ENCODE measurements at regions of chr11 and their contacts with region 1.

Region 1: DNA sequence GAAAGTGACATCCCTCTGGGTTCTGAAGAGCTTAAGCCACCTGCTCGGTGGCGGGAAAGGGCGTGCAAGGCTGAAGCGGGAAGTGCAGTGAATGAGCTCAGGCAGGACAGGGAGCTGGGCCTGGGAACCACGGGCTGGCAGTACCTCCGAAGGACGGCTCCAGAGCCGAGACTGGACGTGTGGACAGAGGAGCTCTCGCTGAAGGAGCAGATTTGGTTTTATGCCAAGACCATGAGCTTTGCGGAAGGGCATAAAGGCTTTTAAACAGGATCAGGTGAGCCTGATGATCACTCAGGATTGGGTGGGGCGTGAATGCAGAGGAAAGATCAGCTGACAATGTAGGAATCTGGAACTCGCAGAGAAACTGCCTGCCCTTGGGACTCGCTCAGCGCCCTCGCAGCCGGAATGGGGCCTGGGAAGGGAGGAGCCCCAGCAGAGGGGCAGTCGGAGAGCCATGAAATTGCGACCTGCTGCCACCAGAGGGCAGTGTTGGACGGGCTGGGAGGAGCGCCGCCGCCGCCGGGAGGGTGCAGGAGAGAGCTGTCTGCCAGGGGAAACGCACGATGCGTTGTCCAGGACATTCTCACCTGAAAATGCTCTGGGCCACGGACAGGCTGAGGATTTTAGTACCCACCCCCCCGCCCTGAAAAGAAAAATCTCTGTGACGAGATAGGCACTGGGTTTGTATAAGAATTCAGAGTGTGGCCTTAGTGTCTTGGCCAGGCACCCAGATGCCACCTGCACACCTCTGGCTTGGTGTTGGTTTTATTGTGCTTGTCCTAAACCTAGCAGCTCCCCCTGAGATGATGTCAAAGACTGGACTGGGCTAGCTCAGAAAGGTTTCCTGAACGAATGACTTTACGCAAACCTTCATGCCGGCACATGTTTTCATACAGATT is 324.4 kb downstream of the NTM start:
- DNase-seq: peak; percentile 75
- H3K4me3 ChIP-seq: no peak overlapping the region
- H3K27ac ChIP-seq: no peak overlapping the region
- H3K4me1 ChIP-seq: no peaks in the 10 kb centered on the region
- H3K27me3 ChIP-seq: peaks cover 0 to 2% of the 10 kb centered on the region in 2 experiments
- CTCF ChIP-seq: peak; percentile 92 to 97
- POLR2A ChIP-seq: no peak

Region 2: DNA sequence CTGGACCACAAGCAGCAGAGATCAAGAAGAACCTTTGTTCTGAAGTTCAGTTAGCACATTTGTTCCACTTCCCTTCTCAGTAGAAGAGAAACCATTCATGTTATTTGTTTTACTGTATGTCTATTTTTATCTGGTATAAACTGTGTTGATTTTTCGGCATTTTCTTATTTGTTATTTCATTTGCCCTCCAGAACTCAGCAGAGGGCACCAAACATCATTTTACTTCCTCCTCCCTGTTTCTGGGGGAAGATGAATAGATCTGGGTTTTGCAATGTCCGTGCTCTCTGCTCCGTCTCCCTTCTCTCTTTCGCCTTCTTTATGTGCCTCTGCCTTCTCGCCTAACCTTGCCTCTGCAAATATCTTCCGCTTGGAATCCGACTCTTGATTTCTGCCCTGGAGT is 42.6 kb after region 1 on chr11:
- CTCF ChIA-PET with region 1: interaction called, 26 read pairs
- POLR2A ChIA-PET with region 1: no interaction called
- dilution Hi-C with region 1: no loop called
- intact Hi-C with region 1: no loop called
- DNase-seq: no peak
- H3K4me3 ChIP-seq: no peak overlapping the region
- H3K27ac ChIP-seq: no peak overlapping the region
- H3K4me1 ChIP-seq: peaks cover 6% of the 10 kb centered on the region
- H3K27me3 ChIP-seq: no peaks in the 10 kb centered on the region
- CTCF ChIP-seq: no peak
- POLR2A ChIP-seq: no peak

Region 3: DNA sequence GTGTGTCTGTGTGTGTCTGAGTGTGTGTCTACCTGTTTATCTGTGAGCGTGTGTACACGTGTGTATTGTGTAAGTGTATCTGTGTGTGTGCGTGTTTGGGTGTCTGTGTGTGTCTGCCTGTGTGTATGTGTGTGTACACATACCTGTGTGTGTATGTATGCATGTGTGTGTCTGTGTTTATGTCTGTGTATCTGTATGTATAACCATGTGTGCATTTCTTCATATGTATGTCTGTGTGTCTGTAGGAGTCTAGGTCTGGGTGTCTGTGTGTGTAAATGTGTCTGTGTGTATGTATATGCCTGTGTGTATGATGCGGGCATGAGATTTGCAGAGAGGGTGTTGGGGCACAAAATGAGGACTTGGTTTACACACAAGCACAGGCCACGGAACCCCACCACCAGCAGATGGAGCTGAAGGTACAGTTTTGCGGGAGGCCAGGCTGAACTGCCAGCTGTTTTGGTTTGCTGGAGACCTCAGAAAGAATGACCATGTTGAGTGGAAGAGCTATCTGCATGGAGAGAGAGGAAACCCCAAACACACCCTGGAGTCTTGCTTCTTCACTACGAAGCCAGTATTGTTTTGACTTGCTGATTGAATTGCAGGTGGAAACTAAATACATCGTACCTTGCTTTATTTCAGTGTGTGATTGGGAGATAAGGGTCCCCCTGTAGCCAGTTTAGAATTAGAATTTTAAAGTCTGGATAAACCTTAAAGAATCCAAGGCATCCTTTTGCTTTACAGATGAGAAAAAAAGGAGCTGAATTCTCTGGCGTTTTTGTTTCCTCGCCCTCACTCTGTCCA is 172.9 kb after region 1 on chr11:
- CTCF ChIA-PET with region 1: interaction called, 105 read pairs
- POLR2A ChIA-PET with region 1: no interaction called
- dilution Hi-C with region 1: no loop called
- intact Hi-C with region 1: loop called (anchors 1 kb)
- DNase-seq: peak; percentile 80
- H3K4me3 ChIP-seq: no peak overlapping the region
- H3K27ac ChIP-seq: no peak overlapping the region
- H3K4me1 ChIP-seq: peaks cover 36% of the 10 kb centered on the region
- H3K27me3 ChIP-seq: no peaks in the 10 kb centered on the region
- CTCF ChIP-seq: peak; percentile 85 to 88
- POLR2A ChIP-seq: no peak

Region 4: GRCh38 chr11:132028380-132029240 is 333.8 kb after region 1 on chr11:
- CTCF ChIA-PET with region 1: interaction called, 10 read pairs
- POLR2A ChIA-PET with region 1: no interaction called
- dilution Hi-C with region 1: no loop called
- intact Hi-C with region 1: loop called (anchors 2 kb)
- DNase-seq: peak; percentile 74
- H3K4me3 ChIP-seq: no peak overlapping the region
- H3K27ac ChIP-seq: no peak overlapping the region
- H3K4me1 ChIP-seq: peaks cover 13% of the 10 kb centered on the region
- H3K27me3 ChIP-seq: no peaks in the 10 kb centered on the region
- CTCF ChIP-seq: peak; percentile 61 to 65
- POLR2A ChIP-seq: no peak

Region 5: DNA sequence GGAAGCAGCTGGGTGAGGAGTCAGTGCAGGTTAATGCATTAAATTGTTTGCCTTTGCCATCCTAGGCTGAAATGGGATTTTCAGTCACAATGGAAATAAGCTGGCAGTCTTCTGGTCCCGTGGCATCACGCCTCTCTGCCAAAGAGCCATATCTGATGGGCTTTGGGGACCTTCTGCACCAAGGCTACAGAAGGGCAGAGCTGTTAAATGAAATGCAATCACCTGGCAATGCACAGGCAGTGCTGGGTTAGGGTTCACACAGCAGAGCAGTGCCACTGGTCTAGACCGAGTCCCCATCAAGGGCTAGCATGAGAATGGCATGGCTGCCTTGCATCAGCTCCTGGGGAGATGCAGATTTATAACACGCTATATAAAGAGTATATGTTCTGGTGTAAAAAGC is 424.8 kb after region 1 on chr11:
- CTCF ChIA-PET with region 1: interaction called, 12 read pairs
- POLR2A ChIA-PET with region 1: no interaction called
- dilution Hi-C with region 1: no loop called
- intact Hi-C with region 1: no loop called
- DNase-seq: no peak
- H3K4me3 ChIP-seq: no peak overlapping the region
- H3K27ac ChIP-seq: no peak overlapping the region
- H3K4me1 ChIP-seq: no peaks in the 10 kb centered on the region
- H3K27me3 ChIP-seq: no peaks in the 10 kb centered on the region
- CTCF ChIP-seq: no peak
- POLR2A ChIP-seq: no peak